CD4-positive, alpha-beta memory T cell (primary cell): ENCODE measurements at regions of chr21 and their contacts with region 1.

Region 1: GRCh38 chr21:42973991-42974831 is at the start of gene PKNOX1:
- DNase-seq: peak; percentile 99 to 100 (median 99)
- H3K4me3 ChIP-seq: peak within 1 kb of the TSS; percentile 70 to 94
- H3K4me3 Mint-ChIP-seq: peak within 1 kb of the TSS; percentile 84 to 95 (median 90)
- H3K27ac ChIP-seq: peak within 1 kb of the TSS; percentile 91
- H3K27ac Mint-ChIP-seq: peak within 1 kb of the TSS; percentile 91 to 98 (median 93)
- H3K4me1 ChIP-seq: peaks cover 25% of the 10 kb centered on the region
- H3K4me1 Mint-ChIP-seq: peaks cover 16 to 42% (median 30%) of the 10 kb centered on the region in 4 donors
- H3K27me3 ChIP-seq: no peaks in the 10 kb centered on the region
- H3K27me3 Mint-ChIP-seq: no peaks in the 10 kb centered on the region
- total RNA-seq, gene PKNOX1: 21.5 to 24.8 TPM

Region 2: DNA sequence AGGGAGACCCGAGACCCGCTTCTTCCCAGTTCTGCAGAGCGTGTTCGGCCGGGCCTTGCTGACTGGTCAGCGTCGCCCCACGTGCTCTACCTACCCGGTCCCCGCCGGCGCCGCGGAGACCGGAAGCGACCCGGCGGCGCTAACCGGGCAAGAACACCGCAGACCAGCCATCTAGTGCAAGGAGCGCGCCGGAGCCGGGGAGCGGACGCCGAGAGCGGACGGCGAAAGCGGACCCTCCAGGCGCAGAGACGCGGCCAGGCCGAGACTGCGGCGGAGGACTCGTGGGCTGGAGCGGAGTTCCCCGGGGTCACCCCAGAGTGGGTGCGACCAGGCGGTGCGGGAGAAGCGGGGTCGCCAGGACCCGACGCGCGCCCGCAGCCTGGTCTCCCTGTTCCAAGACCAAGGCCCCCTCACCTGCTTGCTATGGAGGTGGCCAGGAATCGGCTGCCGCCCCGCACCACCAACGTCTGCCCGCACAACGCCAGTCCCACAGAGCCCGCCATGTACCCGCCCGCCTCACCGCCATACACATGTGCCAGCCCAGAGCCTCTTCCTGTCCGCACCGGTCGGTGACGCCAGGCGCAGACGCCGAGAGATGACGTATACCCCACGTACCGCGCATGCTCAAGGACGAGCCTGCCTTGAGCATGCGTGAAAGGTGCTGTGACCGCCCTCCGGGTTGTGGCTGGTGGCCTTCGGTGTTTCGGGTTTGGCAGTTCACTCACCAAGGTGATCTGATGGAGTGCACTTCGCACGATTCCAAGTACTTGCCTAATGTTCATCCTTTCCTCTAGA is 95.0 kb before region 1 on chr21 and contains the start of gene WDR4:
- CTCF ChIA-PET with region 1: no interaction called
- POLR2A ChIA-PET with region 1: interaction called, 5 read pairs
- intact Hi-C with region 1: loop called (anchors 1 kb)
- DNase-seq: peak; percentile 98 to 99 (median 99)
- H3K4me3 ChIP-seq: peak within 1 kb of the TSS; percentile 79 to 98
- H3K4me3 Mint-ChIP-seq: peak within 1 kb of the TSS; percentile 96 to 98 (median 97)
- H3K27ac ChIP-seq: peak within 1 kb of the TSS; percentile 92
- H3K27ac Mint-ChIP-seq: peak within 1 kb of the TSS; percentile 98 to 100 (median 99)
- H3K4me1 ChIP-seq: peaks cover 23% of the 10 kb centered on the region
- H3K4me1 Mint-ChIP-seq: peaks cover 19 to 41% (median 24%) of the 10 kb centered on the region in 4 donors
- H3K27me3 ChIP-seq: no peaks in the 10 kb centered on the region
- H3K27me3 Mint-ChIP-seq: peaks cover 0 to 3% of the 10 kb centered on the region in 2 donors
- total RNA-seq, gene WDR4: 23.5 to 27.5 TPM